ENCODE measurements at regions of chr15 and their contacts with region 1.

Region 1: GRCh38 chr15:50134520-50135024 is 15.5 kb upstream of the ATP8B4 start:
- DNase-seq: peak; percentile 89
- ATAC-seq: peak; percentile 44
- H3K4me3 ChIP-seq: no peak overlapping the region
- H3K27ac ChIP-seq: peak overlapping the region; percentile 60
- H3K4me1 ChIP-seq: peaks cover 17% of the 10 kb centered on the region
- H3K27me3 ChIP-seq: no peaks in the 10 kb centered on the region
- CTCF ChIP-seq: no peak
- POLR2A ChIP-seq: no peak
- RAD21 ChIP-seq: no peak

Region 2: GRCh38 chr15:49155110-49155833 is 979.3 kb before region 1 on chr15 and contains the start of gene COPS2:
- CTCF ChIA-PET with region 1: no interaction called
- POLR2A ChIA-PET with region 1: no interaction called
- dilution Hi-C with region 1: no loop called
- in situ Hi-C with region 1: no loop called
- intact Hi-C with region 1: loop called (anchors 5 kb)
- DNase-seq: peak; percentile 99
- ATAC-seq: peak; percentile 97
- H3K4me3 ChIP-seq: peak within 1 kb of the TSS; percentile 70
- H3K27ac ChIP-seq: peak within 1 kb of the TSS; percentile 78
- H3K4me1 ChIP-seq: no peaks in the 10 kb centered on the region
- H3K27me3 ChIP-seq: no peaks in the 10 kb centered on the region
- CTCF ChIP-seq: no peak
- POLR2A ChIP-seq: peak; percentile 86
- RAD21 ChIP-seq: no peak
- total RNA-seq, gene COPS2: 75.6 and 103 TPM in 2 replicates

Region 3: GRCh38 chr15:49438962-49439631 is 695.5 kb before region 1 on chr15:
- CTCF ChIA-PET with region 1: no interaction called
- POLR2A ChIA-PET with region 1: no interaction called
- dilution Hi-C with region 1: no loop called
- in situ Hi-C with region 1: no loop called
- intact Hi-C with region 1: loop called (anchors 5 kb)
- DNase-seq: no peak
- ATAC-seq: no peak; the same call in 1 of the 2 replicates
- H3K4me3 ChIP-seq: no peak overlapping the region
- H3K27ac ChIP-seq: peak overlapping the region; percentile 21
- H3K4me1 ChIP-seq: peaks cover 22% of the 10 kb centered on the region
- H3K27me3 ChIP-seq: no peaks in the 10 kb centered on the region
- CTCF ChIP-seq: no peak
- POLR2A ChIP-seq: no peak
- RAD21 ChIP-seq: no peak

Region 4: GRCh38 chr15:50077651-50078050 is 56.9 kb before region 1 on chr15:
- CTCF ChIA-PET with region 1: no interaction called
- POLR2A ChIA-PET with region 1: no interaction called
- dilution Hi-C with region 1: no loop called
- in situ Hi-C with region 1: no loop called
- intact Hi-C with region 1: no loop called
- DNase-seq: no peak
- ATAC-seq: no peak
- H3K4me3 ChIP-seq: no peak overlapping the region
- H3K27ac ChIP-seq: no peak overlapping the region
- H3K4me1 ChIP-seq: no peaks in the 10 kb centered on the region
- H3K27me3 ChIP-seq: no peaks in the 10 kb centered on the region; the same call in 1 of the 2 replicates
- CTCF ChIP-seq: no peak
- POLR2A ChIP-seq: no peak
- RAD21 ChIP-seq: no peak

Region 5: GRCh38 chr15:50523851-50524251 is 389.3 kb after region 1 on chr15:
- CTCF ChIA-PET with region 1: interaction called, 10 read pairs
- POLR2A ChIA-PET with region 1: no interaction called
- dilution Hi-C with region 1: no loop called
- in situ Hi-C with region 1: no loop called
- intact Hi-C with region 1: no loop called
- DNase-seq: no peak
- ATAC-seq: no peak
- H3K4me3 ChIP-seq: no peak overlapping the region
- H3K27ac ChIP-seq: no peak overlapping the region
- H3K4me1 ChIP-seq: no peaks in the 10 kb centered on the region
- H3K27me3 ChIP-seq: peaks cover 1% of the 10 kb centered on the region; the same call in 1 of the 2 replicates
- CTCF ChIP-seq: no peak
- POLR2A ChIP-seq: no peak
- RAD21 ChIP-seq: no peak

Region 6: DNA sequence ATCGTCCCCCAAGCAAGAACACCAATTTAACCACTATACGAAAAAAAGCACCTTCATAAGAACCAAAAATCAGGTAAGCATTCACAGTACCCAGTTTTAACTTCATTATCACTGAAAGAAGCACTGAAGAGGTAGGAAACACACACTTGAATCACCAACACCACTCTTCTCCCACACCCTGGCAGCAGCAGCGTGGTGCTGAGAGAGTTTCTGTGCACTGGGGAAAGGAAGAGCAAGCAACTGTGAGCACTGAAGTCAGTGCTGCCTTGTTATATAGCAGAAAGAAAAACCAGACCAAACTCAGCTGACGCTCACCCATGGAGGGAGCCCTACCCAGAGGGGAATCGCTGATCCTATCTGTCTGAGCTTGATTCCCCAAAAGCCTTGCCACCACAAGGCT is 1389.8 kb after region 1 on chr15:
- CTCF ChIA-PET with region 1: no interaction called
- POLR2A ChIA-PET with region 1: no interaction called
- dilution Hi-C with region 1: no loop called
- in situ Hi-C with region 1: no loop called
- intact Hi-C with region 1: no loop called
- DNase-seq: no peak
- ATAC-seq: no peak
- H3K4me3 ChIP-seq: no peak overlapping the region
- H3K27ac ChIP-seq: no peak overlapping the region
- H3K4me1 ChIP-seq: no peaks in the 10 kb centered on the region
- H3K27me3 ChIP-seq: no peaks in the 10 kb centered on the region
- CTCF ChIP-seq: no peak
- POLR2A ChIP-seq: no peak
- RAD21 ChIP-seq: no peak